ENCODE measurements at regions of chr19 and their contacts with region 1.

Region 1: GRCh38 chr19:7868676-7869452 is 5.3 kb downstream of the PRR36 start:
- DNase-seq: peak; percentile 83
- ATAC-seq: peak; percentile 80
- H3K4me3 Mint-ChIP-seq: peak overlapping the region; percentile 65
- H3K27ac Mint-ChIP-seq: peak overlapping the region; percentile 74
- H3K4me1 Mint-ChIP-seq: peaks cover 47% of the 10 kb centered on the region
- H3K27me3 Mint-ChIP-seq: peaks cover 47% of the 10 kb centered on the region

Region 2: GRCh38 chr19:7718668-7719067 is 150.2 kb before region 1 on chr19:
- CTCF ChIA-PET with region 1: no interaction called
- POLR2A ChIA-PET with region 1: no interaction called
- DNase-seq: no peak
- ATAC-seq: peak; percentile 33
- H3K4me3 Mint-ChIP-seq: no peak overlapping the region
- H3K27ac Mint-ChIP-seq: no peak overlapping the region
- H3K4me1 Mint-ChIP-seq: peaks cover 7% of the 10 kb centered on the region
- H3K27me3 Mint-ChIP-seq: peaks cover 2% of the 10 kb centered on the region

Region 3: DNA sequence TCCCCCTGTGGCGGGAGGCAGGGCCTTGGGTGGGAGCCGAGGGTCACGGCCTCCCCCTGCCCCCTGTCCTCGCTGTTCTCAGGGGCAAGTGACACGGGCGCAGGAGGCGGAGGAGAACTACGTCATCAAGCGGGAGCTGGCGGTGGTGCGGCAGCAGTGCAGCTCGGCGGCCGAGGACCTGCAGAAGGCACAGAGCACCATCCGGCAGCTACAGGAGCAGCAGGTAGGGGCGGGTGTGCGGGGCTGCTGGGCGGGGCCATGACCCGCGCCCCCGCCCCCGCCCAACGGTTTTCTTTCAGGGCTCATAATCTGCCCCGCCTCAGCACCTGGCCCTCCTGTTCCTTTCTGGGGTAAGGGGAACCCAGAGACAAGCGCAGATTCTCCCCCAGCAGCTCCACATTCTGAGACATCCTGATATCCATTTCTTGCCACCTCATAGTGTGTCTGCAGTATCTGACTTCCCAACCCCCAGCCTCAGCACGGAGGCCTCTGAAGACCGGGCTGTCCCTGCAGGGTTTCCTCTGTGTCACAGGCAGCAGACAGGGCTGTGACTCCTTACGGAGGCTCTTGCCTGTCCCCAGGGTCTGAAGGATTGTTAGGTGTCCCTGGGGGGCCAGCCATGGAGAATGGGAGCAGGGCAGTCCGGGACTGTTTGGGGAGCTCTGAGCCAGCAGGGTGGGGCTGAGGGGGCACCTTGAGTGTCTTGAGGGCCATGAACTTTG is 10.6 kb before region 1 on chr19:
- CTCF ChIA-PET with region 1: interaction called, 19 read pairs
- POLR2A ChIA-PET with region 1: no interaction called
- DNase-seq: no peak
- ATAC-seq: no peak
- H3K4me3 Mint-ChIP-seq: no peak overlapping the region
- H3K27ac Mint-ChIP-seq: no peak overlapping the region
- H3K4me1 Mint-ChIP-seq: peaks cover 2% of the 10 kb centered on the region
- H3K27me3 Mint-ChIP-seq: peaks cover 13% of the 10 kb centered on the region

Region 4: GRCh38 chr19:7879836-7880235 is 11.0 kb after region 1 on chr19:
- CTCF ChIA-PET with region 1: interaction called, 14 read pairs
- POLR2A ChIA-PET with region 1: no interaction called
- DNase-seq: no peak
- ATAC-seq: no peak
- H3K4me3 Mint-ChIP-seq: no peak overlapping the region
- H3K27ac Mint-ChIP-seq: no peak overlapping the region
- H3K4me1 Mint-ChIP-seq: peaks cover 3% of the 10 kb centered on the region
- H3K27me3 Mint-ChIP-seq: peaks cover 3% of the 10 kb centered on the region

Region 5: GRCh38 chr19:7888145-7888825 is 19.4 kb after region 1 on chr19 and contains the start of gene LRRC8E:
- CTCF ChIA-PET with region 1: interaction called, 17 read pairs
- POLR2A ChIA-PET with region 1: no interaction called
- DNase-seq: no peak
- ATAC-seq: peak; percentile 80
- H3K4me3 Mint-ChIP-seq: no peak within 1 kb of the TSS
- H3K27ac Mint-ChIP-seq: no peak within 1 kb of the TSS
- H3K4me1 Mint-ChIP-seq: no peaks in the 10 kb centered on the region
- H3K27me3 Mint-ChIP-seq: peaks cover 16% of the 10 kb centered on the region
- total RNA-seq, gene LRRC8E: not detected

Region 6: DNA sequence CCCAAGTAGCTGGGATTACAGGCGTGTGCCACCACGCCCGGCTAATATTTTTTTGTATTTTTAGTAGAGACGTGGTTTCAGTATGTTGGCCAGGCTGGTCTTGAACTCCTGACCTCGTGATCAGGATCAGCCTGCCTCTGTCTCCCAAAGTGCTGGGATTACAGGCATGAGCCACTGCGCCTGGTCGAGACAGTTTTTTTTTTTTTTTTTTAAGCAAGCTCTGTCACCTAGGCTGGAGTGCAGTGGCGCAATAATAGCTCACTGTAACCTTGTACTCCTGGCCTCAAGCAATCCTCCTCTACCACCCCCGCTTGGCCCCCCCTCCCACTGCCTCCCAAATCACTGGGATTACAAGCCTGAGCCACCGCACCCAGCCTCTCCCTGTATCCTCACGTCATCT is 28.4 kb after region 1 on chr19:
- CTCF ChIA-PET with region 1: interaction called, 40 read pairs
- POLR2A ChIA-PET with region 1: interaction called, 3 read pairs
- DNase-seq: no peak
- ATAC-seq: no peak
- H3K4me3 Mint-ChIP-seq: no peak overlapping the region
- H3K27ac Mint-ChIP-seq: no peak overlapping the region
- H3K4me1 Mint-ChIP-seq: peaks cover 6% of the 10 kb centered on the region
- H3K27me3 Mint-ChIP-seq: no peaks in the 10 kb centered on the region

Region 7: DNA sequence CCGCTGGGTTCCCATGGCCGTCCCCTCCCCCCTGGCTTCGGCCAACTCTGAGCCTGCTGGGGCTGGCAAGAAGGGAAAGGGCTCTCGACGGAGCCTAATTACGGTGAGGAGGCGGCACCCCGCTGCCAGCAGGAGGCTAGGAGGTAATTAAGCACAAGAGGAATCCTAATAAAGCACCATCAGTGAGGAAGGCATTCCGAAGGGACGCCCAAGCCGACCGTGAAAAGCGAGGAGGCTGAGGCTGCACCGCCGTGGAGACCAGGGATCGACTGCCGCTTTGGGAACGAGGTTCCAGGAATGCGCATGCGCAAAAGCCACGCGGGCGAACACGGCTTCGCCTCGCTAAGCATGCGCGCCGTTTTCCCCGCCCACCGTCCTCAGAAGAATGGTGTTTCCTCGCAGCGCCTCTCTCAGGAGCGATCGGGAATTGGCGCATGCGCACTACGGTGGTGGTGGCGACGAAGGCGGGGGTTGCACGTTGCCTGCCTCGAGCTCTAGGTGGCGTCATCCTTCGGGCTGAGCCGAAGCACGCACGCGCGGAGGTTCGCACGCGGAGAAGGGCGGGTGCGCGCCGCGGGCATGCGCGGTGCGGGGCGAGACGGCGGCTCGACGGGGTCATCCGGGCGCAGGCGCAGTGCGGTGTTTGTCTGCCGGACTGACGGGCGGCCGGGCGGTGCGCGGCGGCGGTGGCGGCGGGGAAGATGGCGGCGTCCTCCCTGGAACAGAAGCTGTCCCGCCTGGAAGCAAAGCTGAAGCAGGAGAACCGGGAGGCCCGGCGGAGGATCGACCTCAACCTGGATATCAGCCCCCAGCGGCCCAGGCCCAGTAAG is 34.6 kb after region 1 on chr19 and contains the start of gene MAP2K7:
- CTCF ChIA-PET with region 1: interaction called, 40 read pairs
- POLR2A ChIA-PET with region 1: interaction called, 3 read pairs
- DNase-seq: peak; percentile 100
- ATAC-seq: peak; percentile 86
- H3K4me3 Mint-ChIP-seq: peak within 1 kb of the TSS; percentile 85
- H3K27ac Mint-ChIP-seq: peak within 1 kb of the TSS; percentile 95
- H3K4me1 Mint-ChIP-seq: peaks cover 26% of the 10 kb centered on the region
- H3K27me3 Mint-ChIP-seq: no peaks in the 10 kb centered on the region
- total RNA-seq, gene MAP2K7: 36.5 to 39.9 TPM

Region 8: GRCh38 chr19:7919610-7920518 is 51.0 kb after region 1 on chr19 and contains the start of gene SNAPC2:
- CTCF ChIA-PET with region 1: interaction called, 40 read pairs
- POLR2A ChIA-PET with region 1: no interaction called
- DNase-seq: peak; percentile 98
- ATAC-seq: peak; percentile 79
- H3K4me3 Mint-ChIP-seq: peak within 1 kb of the TSS; percentile 96
- H3K27ac Mint-ChIP-seq: peak within 1 kb of the TSS; percentile 94
- H3K4me1 Mint-ChIP-seq: peaks cover 47% of the 10 kb centered on the region
- H3K27me3 Mint-ChIP-seq: peaks cover 30% of the 10 kb centered on the region
- total RNA-seq, gene SNAPC2: 18.6 to 19.0 TPM

Measured in activated CD8-positive, alpha-beta T cell treated with anti-CD3 and anti-CD28 coated beads, Interleukin-2, amount 10 ng/mL, durations not matched to agents 7 days and 5 days (primary cell).